Ascending aorta (tissue), 2 donors: ENCODE measurements at regions of chr6 and their contacts with region 1.

Region 1: GRCh38 chr6:31197559-31198305 is 27.2 kb upstream of the POU5F1 start:
- DNase-seq: peak; percentile 75 to 96
- H3K4me3 ChIP-seq: peak overlapping the region; percentile 73 to 81
- H3K27ac ChIP-seq: peak overlapping the region; percentile 95 to 97
- H3K4me1 ChIP-seq: peaks cover 0 to 11% of the 10 kb centered on the region in 2 donors
- H3K27me3 ChIP-seq: no peaks in the 10 kb centered on the region
- CTCF ChIP-seq: no peak

Region 2: GRCh38 chr6:31139599-31139998 is 58.1 kb before region 1 on chr6:
- intact Hi-C with region 1: loop called (anchors 1 kb)
- DNase-seq: no peak
- H3K4me3 ChIP-seq: no peak overlapping the region
- H3K27ac ChIP-seq: no peak overlapping the region
- H3K4me1 ChIP-seq: peaks cover 0 to 4% of the 10 kb centered on the region in 2 donors
- H3K27me3 ChIP-seq: no peaks in the 10 kb centered on the region
- CTCF ChIP-seq: no peak

Region 3: DNA sequence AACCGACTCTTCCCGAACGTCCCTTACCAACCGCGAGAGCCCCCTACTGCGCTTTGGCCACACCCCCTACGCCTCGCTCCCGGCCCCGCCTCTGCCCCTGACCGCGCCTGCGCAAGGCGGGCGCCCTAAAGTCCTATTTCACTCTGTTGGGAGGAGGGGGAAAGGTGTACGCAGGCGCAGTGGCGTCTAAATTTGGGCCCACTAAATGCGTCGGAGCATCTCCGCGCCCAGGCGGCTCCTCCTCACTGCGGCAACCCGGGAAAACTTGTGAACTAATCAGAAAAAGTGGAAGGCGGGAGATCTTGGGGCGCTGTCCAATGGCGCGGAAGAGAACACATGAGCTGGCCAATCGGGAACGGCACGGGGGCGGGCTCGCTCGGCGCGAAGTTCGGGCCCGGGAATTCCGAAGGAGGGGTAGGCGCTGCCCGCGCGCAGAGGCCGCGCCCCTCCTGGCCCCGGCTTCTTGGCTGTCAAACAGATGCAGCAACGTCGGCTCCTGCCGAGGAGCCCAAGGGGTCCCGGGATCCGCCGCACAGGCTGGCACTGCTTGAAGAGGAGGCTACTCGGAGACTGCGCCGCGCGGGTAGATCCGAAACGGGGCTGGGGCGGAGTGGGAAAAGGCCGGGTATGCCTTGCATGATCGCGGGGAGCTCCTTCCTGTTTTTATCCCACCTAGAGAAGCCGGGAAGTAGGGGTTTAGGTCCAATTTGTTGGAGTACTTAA is 39.4 kb before region 1 on chr6 and contains the start of gene TCF19:
- intact Hi-C with region 1: loop called (anchors 1 kb)
- DNase-seq: peak; percentile 96 to 100
- H3K4me3 ChIP-seq: peak within 1 kb of the TSS; percentile 70 to 86
- H3K27ac ChIP-seq: peak within 1 kb of the TSS; percentile 53 to 70
- H3K4me1 ChIP-seq: peaks cover 0 to 17% of the 10 kb centered on the region in 2 donors
- H3K27me3 ChIP-seq: no peaks in the 10 kb centered on the region
- CTCF ChIP-seq: no peak
- total RNA-seq, gene TCF19: 10.3 TPM

Region 4: GRCh38 chr6:31356946-31357466 is 159.3 kb after region 1 on chr6 and contains the start of gene HLA-B:
- intact Hi-C with region 1: loop called (anchors 2 kb)
- DNase-seq: peak in 1 of 2 donors; percentile 87
- H3K4me3 ChIP-seq: peak within 1 kb of the TSS; percentile 61 to 91
- H3K27ac ChIP-seq: peak within 1 kb of the TSS; percentile 76 to 84
- H3K4me1 ChIP-seq: peaks cover 0 to 5% of the 10 kb centered on the region in 2 donors
- H3K27me3 ChIP-seq: no peaks in the 10 kb centered on the region
- CTCF ChIP-seq: no peak
- total RNA-seq, gene HLA-B: 1,833 TPM

Region 5: GRCh38 chr6:31366693-31367470 is 169.2 kb after region 1 on chr6:
- intact Hi-C with region 1: loop called (anchors 1 kb)
- DNase-seq: peak; percentile 52 to 87
- H3K4me3 ChIP-seq: peak overlapping the region; percentile 46 to 57
- H3K27ac ChIP-seq: no peak overlapping the region
- H3K4me1 ChIP-seq: peaks cover 0 to 3% of the 10 kb centered on the region in 2 donors
- H3K27me3 ChIP-seq: no peaks in the 10 kb centered on the region
- CTCF ChIP-seq: peak; percentile 89 to 93 (median 93)